Aorta (tissue), 5 donors: ENCODE measurements at regions of chr6 and their contacts with region 1.

Region 1: GRCh38 chr6:159360306-159360705 is 191.1 kb downstream of the FNDC1 start:
- DNase-seq: no peak
- ATAC-seq: no peak
- H3K4me3 ChIP-seq: no peak overlapping the region
- H3K27ac ChIP-seq: no peak overlapping the region
- H3K4me1 ChIP-seq: no peaks in the 10 kb centered on the region
- H3K27me3 ChIP-seq: no peaks in the 10 kb centered on the region

Region 2: GRCh38 chr6:159305804-159306537 is 54.3 kb before region 1 on chr6:
- intact Hi-C with region 1: loop called in 1 of 2 experiments (anchors 5 kb)
- DNase-seq: no peak
- ATAC-seq: no peak
- H3K4me3 ChIP-seq: no peak overlapping the region
- H3K27ac ChIP-seq: no peak overlapping the region
- H3K4me1 ChIP-seq: peaks cover 4 to 8% of the 10 kb centered on the region in 2 donors
- H3K27me3 ChIP-seq: no peaks in the 10 kb centered on the region

Region 3: DNA sequence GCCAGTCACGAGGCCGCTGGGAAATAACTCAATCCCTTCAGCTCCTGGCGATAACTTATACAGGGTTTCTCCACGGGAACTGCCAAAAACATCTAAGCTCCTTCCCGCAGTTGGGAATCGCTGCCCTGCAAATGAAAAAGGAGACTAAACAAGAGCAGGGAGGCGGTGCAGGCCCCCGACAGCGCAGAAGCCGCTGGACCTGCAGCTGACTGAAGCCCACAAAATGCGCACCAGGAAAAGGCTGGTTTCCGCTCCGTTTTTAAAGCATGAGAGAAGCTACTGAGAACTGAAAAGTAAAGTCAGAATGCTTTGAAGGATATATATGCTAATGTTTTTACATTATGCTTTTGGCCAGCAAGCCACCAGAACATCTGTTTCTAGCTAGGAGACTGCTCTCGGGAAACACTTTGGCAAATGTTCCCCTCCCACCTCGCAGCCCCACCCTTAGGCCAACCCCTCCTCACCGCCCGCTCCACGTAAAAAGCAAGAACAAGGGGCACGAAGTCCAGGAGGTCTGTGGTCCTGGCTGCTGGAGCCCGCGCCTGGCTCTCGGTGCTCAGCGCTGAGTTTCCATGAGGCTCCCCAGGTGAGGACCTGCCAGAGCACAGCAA is 242.2 kb after region 1 on chr6:
- intact Hi-C with region 1: no loop called
- DNase-seq: peak in 1 of 2 donors; percentile 50
- ATAC-seq: peak; percentile 46
- H3K4me3 ChIP-seq: no peak overlapping the region
- H3K27ac ChIP-seq: peak overlapping the region in 1 of 2 donors; percentile 7
- H3K4me1 ChIP-seq: no peaks in the 10 kb centered on the region
- H3K27me3 ChIP-seq: no peaks in the 10 kb centered on the region